Activated CD4-positive, alpha-beta T cell treated with anti-CD3 and anti-CD28 coated beads for 36 hours (primary cell): ENCODE measurements at regions of chr6 and their contacts with region 1.

Region 1: DNA sequence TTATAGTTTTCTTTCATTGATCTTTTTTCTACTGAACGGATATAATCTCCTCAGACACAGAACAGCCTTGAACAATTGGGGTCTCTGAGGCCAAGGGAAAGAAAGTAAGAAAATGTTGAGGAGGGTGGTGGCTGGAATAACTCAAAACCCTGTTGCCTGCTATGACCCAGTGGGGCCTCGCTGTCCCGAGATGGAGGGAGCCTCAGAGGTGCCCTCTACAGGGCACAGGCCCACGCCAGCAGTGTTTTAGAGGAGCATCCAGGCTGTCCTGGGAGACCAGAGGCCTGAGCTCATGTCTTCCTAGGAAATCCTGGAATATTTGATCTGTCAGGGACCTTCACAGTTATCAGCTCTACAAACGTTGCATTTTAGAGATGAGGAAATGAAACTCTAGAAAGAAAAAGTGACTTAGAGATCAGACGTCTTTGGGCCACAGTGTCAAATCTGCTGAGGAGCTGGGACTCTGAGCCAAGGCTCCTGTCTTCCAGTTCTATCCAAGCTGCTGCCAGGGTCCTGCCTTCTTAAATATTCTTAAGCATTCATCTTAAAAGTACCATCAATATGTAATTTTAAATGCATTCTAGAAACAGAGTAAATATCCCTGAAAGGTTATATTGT is 26.3 kb downstream of the ALDH5A1 start:
- DNase-seq: peak; percentile 65
- ATAC-seq: peak; percentile 88
- H3K4me3 Mint-ChIP-seq: no peak overlapping the region
- H3K27ac Mint-ChIP-seq: no peak overlapping the region
- H3K4me1 Mint-ChIP-seq: peaks cover 7% of the 10 kb centered on the region
- H3K27me3 Mint-ChIP-seq: no peaks in the 10 kb centered on the region

Region 2: GRCh38 chr6:24431045-24431451 is 90.0 kb before region 1 on chr6:
- CTCF ChIA-PET with region 1: interaction called, 3 read pairs
- POLR2A ChIA-PET with region 1: no interaction called
- intact Hi-C with region 1: loop called in 1 of 2 experiments (anchors 5 kb)
- DNase-seq: no peak
- ATAC-seq: no peak
- H3K4me3 Mint-ChIP-seq: no peak overlapping the region
- H3K27ac Mint-ChIP-seq: no peak overlapping the region
- H3K4me1 Mint-ChIP-seq: no peaks in the 10 kb centered on the region
- H3K27me3 Mint-ChIP-seq: no peaks in the 10 kb centered on the region

Region 3: GRCh38 chr6:24494821-24495795 is 25.9 kb before region 1 on chr6 and contains the start of gene ALDH5A1:
- CTCF ChIA-PET with region 1: interaction called, 10 read pairs
- POLR2A ChIA-PET with region 1: no interaction called
- intact Hi-C with region 1: no loop called
- DNase-seq: peak; percentile 92
- ATAC-seq: peak; percentile 84
- H3K4me3 Mint-ChIP-seq: peak within 1 kb of the TSS; percentile 77
- H3K27ac Mint-ChIP-seq: peak within 1 kb of the TSS; percentile 76
- H3K4me1 Mint-ChIP-seq: peaks cover 14% of the 10 kb centered on the region
- H3K27me3 Mint-ChIP-seq: no peaks in the 10 kb centered on the region
- total RNA-seq, gene ALDH5A1: 16.5 to 18.8 TPM

Region 4: GRCh38 chr6:24689964-24690363 is 168.9 kb after region 1 on chr6:
- CTCF ChIA-PET with region 1: interaction called, 3 read pairs
- POLR2A ChIA-PET with region 1: no interaction called
- intact Hi-C with region 1: loop called in 1 of 2 experiments (anchors 10 kb)
- DNase-seq: no peak
- ATAC-seq: no peak
- H3K4me3 Mint-ChIP-seq: no peak overlapping the region
- H3K27ac Mint-ChIP-seq: no peak overlapping the region
- H3K4me1 Mint-ChIP-seq: peaks cover 26% of the 10 kb centered on the region
- H3K27me3 Mint-ChIP-seq: no peaks in the 10 kb centered on the region

Region 5: DNA sequence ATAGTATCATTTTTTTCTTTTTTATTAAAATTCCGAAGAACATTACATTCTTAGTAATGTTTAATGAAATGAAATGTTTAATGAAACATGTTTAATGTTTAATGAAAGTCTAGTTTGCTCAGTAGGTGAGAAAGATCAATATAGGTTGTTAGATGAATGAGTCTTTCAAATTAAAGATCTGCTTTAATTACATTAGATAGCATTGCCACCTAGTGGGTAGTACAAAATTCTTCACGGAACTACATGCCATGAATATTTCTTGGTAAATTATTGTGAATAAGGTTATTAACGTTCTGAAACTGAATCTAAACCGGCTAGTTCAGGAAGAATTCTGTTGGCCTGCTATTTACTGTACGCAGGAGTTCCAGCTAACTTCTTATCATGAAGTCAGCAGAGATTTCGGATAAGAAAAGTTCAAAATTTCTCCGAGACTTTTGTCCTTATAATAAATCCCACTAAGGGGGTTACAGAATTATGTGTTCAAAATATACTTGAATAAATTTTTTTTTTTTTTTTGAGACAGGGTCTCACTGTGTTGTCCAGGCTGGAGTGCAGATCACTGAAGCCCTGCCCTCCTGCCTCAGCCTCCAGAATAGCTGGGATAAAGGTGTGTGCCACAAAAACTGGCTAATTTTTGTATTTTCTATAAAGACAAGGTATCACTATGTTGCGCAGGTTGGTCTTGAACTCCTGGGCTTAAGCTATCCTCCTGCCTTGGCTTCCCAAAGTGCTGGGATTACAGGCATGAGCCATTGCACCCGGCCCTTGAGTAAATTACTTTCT is 245.8 kb after region 1 on chr6:
- CTCF ChIA-PET with region 1: no interaction called
- POLR2A ChIA-PET with region 1: no interaction called
- intact Hi-C with region 1: loop called in 1 of 2 experiments (anchors 10 kb)
- DNase-seq: no peak
- ATAC-seq: peak; percentile 76
- H3K4me3 Mint-ChIP-seq: no peak overlapping the region
- H3K27ac Mint-ChIP-seq: no peak overlapping the region
- H3K4me1 Mint-ChIP-seq: no peaks in the 10 kb centered on the region
- H3K27me3 Mint-ChIP-seq: no peaks in the 10 kb centered on the region